Caco-2 (cell line): ENCODE measurements at regions of chr3 and their contacts with region 1.

Region 1: GRCh38 chr3:187679638-187680396 is 9.6 kb upstream of the SST start:
- DNase-seq: peak; percentile 82 to 86
- H3K4me3 ChIP-seq: no peak overlapping the region
- H3K4me3 Mint-ChIP-seq: peak overlapping the region; percentile 33
- H3K27ac Mint-ChIP-seq: no peak overlapping the region
- H3K4me1 ChIP-seq: peaks cover 5% of the 10 kb centered on the region
- H3K4me1 Mint-ChIP-seq: peaks cover 14% of the 10 kb centered on the region
- H3K27me3 ChIP-seq: no peaks in the 10 kb centered on the region
- H3K27me3 Mint-ChIP-seq: peaks cover 9% of the 10 kb centered on the region
- CTCF ChIP-seq: peak; percentile 88 to 91

Region 2: GRCh38 chr3:187319699-187320302 is 360.0 kb before region 1 on chr3:
- CTCF ChIA-PET with region 1: interaction called, 107 read pairs
- POLR2A ChIA-PET with region 1: no interaction called
- intact Hi-C with region 1: loop called (anchors 1 kb)
- DNase-seq: peak; percentile 66 to 72
- H3K4me3 ChIP-seq: no peak overlapping the region
- H3K4me3 Mint-ChIP-seq: no peak overlapping the region
- H3K27ac Mint-ChIP-seq: no peak overlapping the region
- H3K4me1 ChIP-seq: peaks cover 27% of the 10 kb centered on the region
- H3K4me1 Mint-ChIP-seq: no peaks in the 10 kb centered on the region
- H3K27me3 ChIP-seq: no peaks in the 10 kb centered on the region
- H3K27me3 Mint-ChIP-seq: peaks cover 10% of the 10 kb centered on the region
- CTCF ChIP-seq: peak; percentile 82 to 89

Region 3: GRCh38 chr3:187616307-187616972 is 63.4 kb before region 1 on chr3:
- CTCF ChIA-PET with region 1: interaction called, 21 read pairs
- POLR2A ChIA-PET with region 1: no interaction called
- intact Hi-C with region 1: loop called (anchors 1 kb)
- DNase-seq: peak in 1 of 2 experiments; percentile 71
- H3K4me3 ChIP-seq: no peak overlapping the region
- H3K4me3 Mint-ChIP-seq: no peak overlapping the region
- H3K27ac Mint-ChIP-seq: no peak overlapping the region
- H3K4me1 ChIP-seq: no peaks in the 10 kb centered on the region
- H3K4me1 Mint-ChIP-seq: peaks cover 10% of the 10 kb centered on the region
- H3K27me3 ChIP-seq: no peaks in the 10 kb centered on the region
- H3K27me3 Mint-ChIP-seq: no peaks in the 10 kb centered on the region
- CTCF ChIP-seq: peak; percentile 76 to 82

Region 4: GRCh38 chr3:187667526-187667925 is 12.3 kb before region 1 on chr3:
- CTCF ChIA-PET with region 1: interaction called, 12 read pairs
- POLR2A ChIA-PET with region 1: no interaction called
- intact Hi-C with region 1: no loop called
- DNase-seq: peak in 1 of 2 experiments; percentile 12
- H3K4me3 ChIP-seq: no peak overlapping the region
- H3K4me3 Mint-ChIP-seq: no peak overlapping the region
- H3K27ac Mint-ChIP-seq: no peak overlapping the region
- H3K4me1 ChIP-seq: peaks cover 13% of the 10 kb centered on the region; the same call in 1 of the 2 replicates
- H3K4me1 Mint-ChIP-seq: peaks cover 8% of the 10 kb centered on the region
- H3K27me3 ChIP-seq: no peaks in the 10 kb centered on the region
- H3K27me3 Mint-ChIP-seq: peaks cover 13% of the 10 kb centered on the region
- CTCF ChIP-seq: no peak

Region 5: GRCh38 chr3:187714404-187714979 is 34.7 kb after region 1 on chr3:
- CTCF ChIA-PET with region 1: interaction called, 7 read pairs
- POLR2A ChIA-PET with region 1: no interaction called
- intact Hi-C with region 1: loop called (anchors 1 kb)
- DNase-seq: peak; percentile 68 to 80
- H3K4me3 ChIP-seq: no peak overlapping the region
- H3K4me3 Mint-ChIP-seq: no peak overlapping the region
- H3K27ac Mint-ChIP-seq: no peak overlapping the region
- H3K4me1 ChIP-seq: peaks cover 1% of the 10 kb centered on the region; the same call in 1 of the 2 replicates
- H3K4me1 Mint-ChIP-seq: peaks cover 11% of the 10 kb centered on the region
- H3K27me3 ChIP-seq: no peaks in the 10 kb centered on the region
- H3K27me3 Mint-ChIP-seq: no peaks in the 10 kb centered on the region
- CTCF ChIP-seq: peak; percentile 84 to 90